ENCODE measurements at regions of chr20 and their contacts with region 1.

Region 1: DNA sequence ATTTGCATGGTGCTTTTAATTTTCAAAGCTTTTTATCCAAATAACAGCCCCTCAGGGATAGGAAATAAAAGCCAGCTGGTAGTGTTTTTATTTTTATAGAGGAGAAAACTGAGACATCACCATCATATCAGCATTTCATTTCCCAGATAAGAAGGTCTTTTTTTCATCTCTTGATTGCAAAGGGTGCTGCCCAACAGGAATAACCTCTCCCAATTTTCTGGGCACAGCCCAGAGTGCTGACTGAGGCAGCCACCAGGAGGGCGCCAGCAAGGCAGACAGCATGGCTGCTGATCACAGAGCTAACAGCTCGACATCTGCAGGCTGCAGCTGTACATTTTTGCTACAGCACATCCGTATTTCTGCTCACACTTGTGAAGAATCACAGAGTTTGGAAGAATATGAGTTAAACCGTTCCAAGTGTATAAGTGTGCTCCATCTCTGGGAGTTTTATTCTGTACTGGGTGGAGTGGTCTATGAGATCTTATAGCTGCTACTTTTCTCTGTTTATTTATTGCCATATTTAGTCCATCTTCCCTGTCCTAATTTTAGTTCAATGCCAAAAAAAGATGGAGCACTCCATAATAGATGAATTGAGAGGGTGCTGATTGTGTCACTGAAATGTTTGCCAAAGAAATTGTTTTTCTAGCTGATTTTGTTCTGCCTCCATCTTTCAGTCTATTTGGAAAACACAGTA is 85.5 kb upstream of the C20orf144 start:
- DNase-seq: no peak
- H3K4me3 Mint-ChIP-seq: no peak overlapping the region
- H3K27ac Mint-ChIP-seq: no peak overlapping the region
- H3K4me1 Mint-ChIP-seq: peaks cover 9% of the 10 kb centered on the region
- H3K27me3 Mint-ChIP-seq: no peaks in the 10 kb centered on the region
- CTCF ChIP-seq: no peak

Region 2: DNA sequence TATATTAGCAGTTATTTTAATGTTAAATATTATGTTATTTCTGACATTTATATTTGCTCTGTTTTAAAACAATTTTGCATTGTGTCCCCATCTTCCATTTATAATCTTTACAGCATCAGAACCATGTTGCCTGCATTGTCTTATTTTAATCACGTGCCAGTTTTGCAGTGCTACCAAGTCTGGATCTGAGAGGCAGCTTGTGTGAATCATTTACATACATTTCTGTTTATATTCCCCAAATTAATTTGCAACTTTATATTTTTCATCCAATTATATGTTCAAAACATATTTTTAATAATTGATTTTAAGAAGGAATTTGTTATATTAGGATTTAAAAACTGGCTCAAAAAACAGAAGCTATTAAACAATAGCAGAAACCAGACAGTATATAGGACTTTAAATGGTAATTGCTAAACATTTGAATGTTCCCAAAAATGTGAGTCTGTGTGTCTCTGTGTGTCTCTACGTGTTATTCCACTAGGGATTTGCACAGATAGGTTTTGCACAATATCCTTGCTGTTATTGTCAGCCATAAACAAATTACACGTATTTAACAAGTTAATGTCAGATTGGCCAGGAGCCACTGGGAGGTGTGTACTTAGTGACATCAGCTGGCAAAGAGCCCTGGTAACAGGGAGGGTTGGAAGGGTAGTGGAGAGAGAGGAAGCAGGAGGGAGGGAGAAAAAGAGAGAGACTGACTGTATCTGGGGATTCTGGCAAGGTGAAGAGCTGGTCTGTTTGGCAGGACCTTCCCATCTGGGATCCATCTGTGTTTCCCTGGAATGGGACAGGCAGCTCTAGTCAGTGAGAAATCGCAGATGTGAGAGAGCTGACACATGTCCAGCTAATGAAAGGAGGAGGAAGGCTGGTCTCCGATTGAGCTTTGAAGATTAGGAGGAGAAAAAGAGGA is 14.6 kb before region 1 on chr20:
- CTCF ChIA-PET with region 1: interaction called, 3 read pairs
- POLR2A ChIA-PET with region 1: interaction called, 19 read pairs
- intact Hi-C with region 1: no loop called
- DNase-seq: peak; percentile 95
- H3K4me3 Mint-ChIP-seq: peak overlapping the region; percentile 66
- H3K27ac Mint-ChIP-seq: peak overlapping the region; percentile 65
- H3K4me1 Mint-ChIP-seq: peaks cover 8% of the 10 kb centered on the region
- H3K27me3 Mint-ChIP-seq: no peaks in the 10 kb centered on the region
- CTCF ChIP-seq: no peak

Region 3: DNA sequence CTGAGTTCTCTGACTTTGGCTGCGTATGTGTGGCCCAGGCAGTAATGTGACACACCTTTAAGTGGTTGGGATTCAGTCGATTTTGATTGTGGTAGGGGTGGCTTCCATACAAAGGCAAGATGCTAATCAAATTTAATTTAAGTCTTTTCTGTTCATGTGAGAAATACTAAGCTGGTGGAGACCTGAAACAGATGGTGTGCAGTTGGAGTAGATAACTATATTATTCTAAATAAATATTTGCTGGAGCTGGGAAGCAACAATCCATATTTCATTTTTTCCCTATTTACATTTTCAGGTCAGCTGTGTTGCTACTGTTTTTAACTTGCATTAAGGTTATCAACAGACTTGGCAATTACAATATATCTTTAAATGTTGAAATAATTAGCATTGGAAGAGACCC is 18.2 kb after region 1 on chr20:
- CTCF ChIA-PET with region 1: interaction called, 3 read pairs
- POLR2A ChIA-PET with region 1: interaction called, 10 read pairs
- intact Hi-C with region 1: no loop called
- DNase-seq: no peak
- H3K4me3 Mint-ChIP-seq: no peak overlapping the region
- H3K27ac Mint-ChIP-seq: no peak overlapping the region
- H3K4me1 Mint-ChIP-seq: no peaks in the 10 kb centered on the region
- H3K27me3 Mint-ChIP-seq: no peaks in the 10 kb centered on the region
- CTCF ChIP-seq: no peak